Sciatic nerve (tissue), 2 donors: ENCODE measurements at regions of chr2 and their contacts with region 1.

Region 1: DNA sequence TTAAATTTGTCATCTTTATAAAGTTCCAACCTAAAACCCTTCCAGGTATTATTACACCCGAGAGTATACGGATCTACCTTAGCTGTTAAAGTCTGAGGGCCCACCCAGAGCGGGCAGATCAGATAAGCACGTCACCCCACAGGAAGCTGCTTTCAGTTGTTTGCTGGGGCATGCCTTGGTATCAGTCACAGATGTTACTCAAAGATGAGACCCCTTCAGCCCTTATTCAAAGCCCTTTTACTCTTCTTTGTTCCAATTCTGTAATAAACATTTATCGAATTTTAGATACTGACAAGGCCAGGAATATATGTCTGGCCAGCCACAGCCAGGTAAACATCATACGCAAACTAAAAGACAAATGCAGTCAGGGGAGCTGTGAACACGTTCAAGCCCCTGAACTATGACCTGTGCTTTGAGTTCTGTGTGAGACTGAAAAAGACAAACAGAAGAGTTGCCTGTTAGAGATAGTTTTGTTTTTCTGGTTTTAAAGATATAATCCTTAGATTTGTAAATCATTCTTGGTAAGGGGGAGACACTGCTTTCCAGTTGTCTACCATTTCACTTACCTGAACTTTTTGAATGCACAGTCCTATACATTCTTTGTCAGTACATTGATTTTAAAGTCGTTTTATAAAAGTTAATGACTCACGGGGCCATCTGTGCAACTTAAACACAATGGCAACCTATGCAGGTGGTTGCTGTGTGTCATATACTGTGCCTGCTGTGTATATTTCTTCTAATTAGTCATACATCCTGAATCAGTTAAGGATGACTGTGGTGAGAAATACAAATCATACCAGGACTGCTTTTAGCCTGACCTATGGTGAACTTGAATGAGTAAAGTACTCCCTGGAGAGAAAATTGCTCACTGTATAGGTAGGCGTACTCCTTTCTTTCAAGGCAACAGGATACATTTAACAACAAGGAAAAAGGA is 100.5 kb upstream of the ITPRID2 start:
- DNase-seq: no peak
- ATAC-seq: no peak

Region 2: GRCh38 chr2:180385601-180386201 is 1405.3 kb before region 1 on chr2:
- intact Hi-C with region 1: loop called (anchors 10 kb)
- DNase-seq: no peak
- ATAC-seq: no peak